ENCODE measurements at regions of chr1 and their contacts with region 1.

Region 1: GRCh38 chr1:221125976-221126375 is 246.7 kb downstream of the HLX start:
- DNase-seq: no peak
- ATAC-seq: no peak
- H3K4me3 Mint-ChIP-seq: no peak overlapping the region
- H3K27ac Mint-ChIP-seq: no peak overlapping the region
- H3K4me1 Mint-ChIP-seq: no peaks in the 10 kb centered on the region
- H3K27me3 Mint-ChIP-seq: no peaks in the 10 kb centered on the region
- CTCF ChIP-seq: no peak

Region 2: GRCh38 chr1:220841293-220841692 is 284.7 kb before region 1 on chr1:
- CTCF ChIA-PET with region 1: no interaction called
- POLR2A ChIA-PET with region 1: no interaction called
- intact Hi-C with region 1: no loop called
- DNase-seq: no peak
- ATAC-seq: no peak
- H3K4me3 Mint-ChIP-seq: no peak overlapping the region
- H3K27ac Mint-ChIP-seq: no peak overlapping the region
- H3K4me1 Mint-ChIP-seq: no peaks in the 10 kb centered on the region
- H3K27me3 Mint-ChIP-seq: peaks cover 2% of the 10 kb centered on the region
- CTCF ChIP-seq: no peak

Region 3: DNA sequence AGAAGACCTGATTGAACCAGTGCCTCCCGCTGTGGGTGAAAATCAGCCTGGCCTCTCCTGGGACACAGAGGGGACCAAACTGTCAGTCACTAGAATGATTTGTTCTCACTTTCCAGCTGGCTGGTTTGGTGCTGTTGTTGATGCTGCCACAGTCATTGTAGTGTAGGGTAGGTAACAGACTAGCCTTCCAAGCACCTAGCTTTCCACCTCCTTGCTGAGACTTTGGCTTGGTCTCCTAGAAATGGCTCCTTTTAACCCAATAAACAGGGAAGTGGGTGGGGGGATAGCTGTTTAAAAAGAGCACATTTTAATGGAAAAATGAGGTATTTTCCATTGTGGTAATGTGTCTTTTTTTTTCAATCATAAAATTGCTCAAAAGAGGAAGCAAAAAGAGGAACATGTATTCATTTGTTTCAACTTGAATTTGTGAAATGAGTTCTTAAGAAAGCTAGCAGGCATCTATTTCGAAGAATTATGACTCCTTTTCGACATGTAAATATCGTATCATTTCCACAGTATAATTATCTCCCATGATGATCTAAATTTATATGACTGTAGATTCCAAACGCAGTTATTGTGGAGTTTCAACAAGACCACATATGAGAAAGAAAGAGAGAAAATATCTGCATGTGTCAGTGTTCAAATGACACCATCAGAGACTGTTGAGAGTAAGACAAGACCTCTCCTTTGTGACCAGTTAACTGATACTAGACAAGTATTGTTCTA is 56.6 kb before region 1 on chr1:
- CTCF ChIA-PET with region 1: no interaction called
- POLR2A ChIA-PET with region 1: no interaction called
- intact Hi-C with region 1: loop called (anchors 10 kb)
- DNase-seq: peak; percentile 2
- ATAC-seq: peak; percentile 67
- H3K4me3 Mint-ChIP-seq: no peak overlapping the region
- H3K27ac Mint-ChIP-seq: peak overlapping the region; percentile 26
- H3K4me1 Mint-ChIP-seq: peaks cover 4% of the 10 kb centered on the region
- H3K27me3 Mint-ChIP-seq: peaks cover 8% of the 10 kb centered on the region
- CTCF ChIP-seq: no peak

Measured in activated CD8-positive, alpha-beta T cell treated with anti-CD3 and anti-CD28 coated beads for 36 hours (primary cell).